K562 (cell line): ENCODE measurements at regions of chr1 and their contacts with region 1.

Region 1: GRCh38 chr1:203702130-203702577 is 62.8 kb upstream of the LAX1 start:
- DNase-seq: peak; percentile 81 to 86 (median 84)
- ATAC-seq: peak; percentile 95
- H3K4me3 ChIP-seq: no peak overlapping the region
- H3K27ac ChIP-seq: no peak overlapping the region
- H3K4me1 ChIP-seq: peaks cover 0 to 5% of the 10 kb centered on the region in 2 experiments; a peak in 2 of 5 replicates
- H3K27me3 ChIP-seq: no peaks in the 10 kb centered on the region
- CTCF ChIP-seq: peak; percentile 90 to 97 (median 91)
- EP300 ChIP-seq: no peak; the same call in 1 of the 2 replicates
- POLR2A ChIP-seq: no peak
- RAD21 ChIP-seq: peak; percentile 99 to 100

Region 2: GRCh38 chr1:203340112-203340804 is 361.9 kb before region 1 on chr1:
- CTCF ChIA-PET with region 1: interaction called, 8 read pairs
- POLR2A ChIA-PET with region 1: no interaction called
- in situ Hi-C with region 1: no loop called
- intact Hi-C with region 1: loop called (anchors 5 kb)
- DNase-seq: peak; percentile 84 to 88 (median 88)
- ATAC-seq: peak; percentile 87
- H3K4me3 ChIP-seq: no peak overlapping the region
- H3K27ac ChIP-seq: no peak overlapping the region
- H3K4me1 ChIP-seq: peaks cover 0 to 4% of the 10 kb centered on the region in 2 experiments; a peak in 3 of 5 replicates
- H3K27me3 ChIP-seq: peaks cover 26 to 44% of the 10 kb centered on the region in 2 experiments
- CTCF ChIP-seq: peak; percentile 93 to 97 (median 94)
- EP300 ChIP-seq: no peak
- POLR2A ChIP-seq: no peak
- RAD21 ChIP-seq: peak; percentile 93 to 94

Region 3: DNA sequence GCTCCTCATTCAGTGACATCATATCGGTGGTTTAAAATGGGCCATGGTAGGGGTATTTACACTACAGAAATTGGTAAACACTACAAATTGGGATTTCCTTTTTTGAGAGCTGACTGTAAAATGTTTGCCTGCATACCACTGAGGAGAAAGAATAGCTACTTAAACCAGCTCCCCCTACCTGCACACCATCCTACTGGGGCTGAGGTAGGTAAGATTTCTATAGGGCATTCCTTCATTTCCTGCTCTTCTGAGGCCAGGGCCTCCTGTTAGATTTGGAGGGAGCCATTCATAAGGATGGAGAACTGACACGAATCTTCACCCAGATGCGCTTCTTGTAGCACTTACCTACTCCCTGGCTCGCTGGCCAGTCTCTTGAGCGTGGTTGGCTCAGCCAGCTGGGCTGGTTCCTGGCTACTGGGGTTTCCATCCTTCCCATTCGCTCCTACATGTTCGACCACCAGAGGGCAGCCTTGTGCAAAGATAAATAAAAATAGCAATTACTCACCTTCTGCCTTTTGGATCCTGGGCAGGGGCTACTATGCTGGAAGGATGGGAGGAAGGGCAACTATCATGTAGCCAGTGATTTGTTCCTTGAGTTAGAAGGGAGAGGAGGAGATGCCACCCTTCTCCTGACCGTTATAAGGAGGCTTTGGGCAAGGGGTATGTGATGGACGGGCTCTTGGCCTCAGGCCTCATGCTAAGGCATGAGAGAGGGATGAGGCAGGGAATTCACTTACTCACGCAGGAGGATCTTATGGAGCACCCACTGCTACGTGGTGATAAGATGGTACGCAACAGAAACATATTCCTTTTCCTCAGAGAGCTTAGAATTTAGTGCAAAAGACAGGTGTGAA is 197.5 kb before region 1 on chr1:
- CTCF ChIA-PET with region 1: interaction called, 65 read pairs
- POLR2A ChIA-PET with region 1: interaction called, 3 read pairs
- in situ Hi-C with region 1: loop called (anchors 5 kb)
- intact Hi-C with region 1: loop called (anchors 1 kb)
- DNase-seq: peak; percentile 85 to 88 (median 86)
- ATAC-seq: peak; percentile 88
- H3K4me3 ChIP-seq: no peak overlapping the region
- H3K27ac ChIP-seq: no peak overlapping the region
- H3K4me1 ChIP-seq: no peaks in the 10 kb centered on the region
- H3K27me3 ChIP-seq: peaks cover 19 to 53% of the 10 kb centered on the region in 2 experiments
- CTCF ChIP-seq: peak; percentile 76 to 92 (median 85)
- EP300 ChIP-seq: no peak
- POLR2A ChIP-seq: no peak
- RAD21 ChIP-seq: peak; percentile 93 to 94

Region 4: DNA sequence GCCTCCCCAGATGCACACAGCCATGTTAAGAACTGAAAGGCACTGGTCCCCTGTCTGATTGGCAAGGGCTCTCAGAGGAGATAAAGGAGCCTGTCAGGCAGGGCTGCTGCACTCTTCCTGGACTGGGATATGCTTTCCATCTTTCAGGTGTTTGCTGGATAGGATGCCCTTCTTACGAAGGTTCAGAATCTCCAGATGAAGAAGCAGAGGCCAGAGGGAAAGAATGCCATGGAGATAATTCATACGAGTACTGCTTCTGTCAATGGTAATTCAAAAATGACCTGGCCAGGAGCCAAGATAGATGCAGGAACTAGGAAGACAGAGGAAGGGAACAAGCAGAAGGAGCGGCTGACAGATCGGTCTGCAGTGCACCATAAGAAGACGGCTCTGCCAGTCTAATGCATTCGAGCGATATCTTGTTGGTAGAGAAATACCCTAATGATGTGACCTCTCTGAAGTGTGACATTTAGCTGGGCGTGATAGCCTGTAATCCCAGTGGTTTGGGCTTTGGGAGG is 92.1 kb before region 1 on chr1:
- CTCF ChIA-PET with region 1: interaction called, 45 read pairs
- POLR2A ChIA-PET with region 1: no interaction called
- in situ Hi-C with region 1: loop called (anchors 5 kb)
- intact Hi-C with region 1: loop called (anchors 1 kb)
- DNase-seq: no peak
- ATAC-seq: no peak
- H3K4me3 ChIP-seq: no peak overlapping the region
- H3K27ac ChIP-seq: no peak overlapping the region
- H3K4me1 ChIP-seq: peaks cover 12 to 15% of the 10 kb centered on the region in 2 experiments; a peak in 4 of 5 replicates
- H3K27me3 ChIP-seq: no peaks in the 10 kb centered on the region; a peak in 1 of 5 replicates
- CTCF ChIP-seq: no peak
- EP300 ChIP-seq: no peak
- POLR2A ChIP-seq: no peak
- RAD21 ChIP-seq: no peak

Region 5: GRCh38 chr1:203625628-203626019 is 76.5 kb before region 1 on chr1:
- CTCF ChIA-PET with region 1: interaction called, 35 read pairs
- POLR2A ChIA-PET with region 1: interaction called, 7 read pairs
- in situ Hi-C with region 1: no loop called
- intact Hi-C with region 1: loop called (anchors 1 kb)
- DNase-seq: peak; percentile 74 to 79 (median 78)
- ATAC-seq: peak; percentile 49
- H3K4me3 ChIP-seq: no peak overlapping the region
- H3K27ac ChIP-seq: peak overlapping the region; percentile 92
- H3K4me1 ChIP-seq: peaks cover 40 to 49% of the 10 kb centered on the region in 2 experiments
- H3K27me3 ChIP-seq: no peaks in the 10 kb centered on the region
- CTCF ChIP-seq: peak; percentile 65 to 87 (median 69)
- EP300 ChIP-seq: peak; percentile 45
- POLR2A ChIP-seq: no peak
- RAD21 ChIP-seq: peak; percentile 94 to 95

Region 6: GRCh38 chr1:203638950-203639349 is 63.2 kb before region 1 on chr1:
- CTCF ChIA-PET with region 1: no interaction called
- POLR2A ChIA-PET with region 1: no interaction called
- in situ Hi-C with region 1: no loop called
- intact Hi-C with region 1: no loop called
- DNase-seq: peak in 2 of 4 experiments; percentile 50 to 57
- ATAC-seq: peak; percentile 79
- H3K4me3 ChIP-seq: no peak overlapping the region
- H3K27ac ChIP-seq: no peak overlapping the region
- H3K4me1 ChIP-seq: peaks cover 11 to 21% of the 10 kb centered on the region in 2 experiments; a peak in 4 of 5 replicates
- H3K27me3 ChIP-seq: no peaks in the 10 kb centered on the region; a peak in 1 of 5 replicates
- CTCF ChIP-seq: peak; percentile 14 to 64 (median 35); a peak in 4 of 6 replicates
- EP300 ChIP-seq: 0 out of 2 replicates have a peak, but pooled peaks have one; percentile 3
- POLR2A ChIP-seq: no peak
- RAD21 ChIP-seq: peak; percentile 67 to 87